Activated naive CD4-positive, alpha-beta T cell treated with anti-CD3 and anti-CD28 coated beads, Interleukin-2, amount 10 ng/mL, durations not matched to agents 7 days and 5 days (primary cell): ENCODE measurements at regions of chr15 and their contacts with region 1.

Region 1: GRCh38 chr15:90598031-90598577 is 68.4 kb downstream of the CRTC3 start:
- DNase-seq: peak; percentile 32
- H3K4me3 Mint-ChIP-seq: peak overlapping the region; percentile 27
- H3K27ac Mint-ChIP-seq: peak overlapping the region; percentile 100
- H3K4me1 Mint-ChIP-seq: peaks cover 80% of the 10 kb centered on the region
- H3K27me3 Mint-ChIP-seq: no peaks in the 10 kb centered on the region

Region 2: GRCh38 chr15:90306560-90306959 is 291.5 kb before region 1 on chr15:
- CTCF ChIA-PET with region 1: no interaction called
- DNase-seq: peak; percentile 50
- H3K4me3 Mint-ChIP-seq: no peak overlapping the region
- H3K27ac Mint-ChIP-seq: peak overlapping the region; percentile 70
- H3K4me1 Mint-ChIP-seq: peaks cover 24% of the 10 kb centered on the region
- H3K27me3 Mint-ChIP-seq: peaks cover 6% of the 10 kb centered on the region

Region 3: DNA sequence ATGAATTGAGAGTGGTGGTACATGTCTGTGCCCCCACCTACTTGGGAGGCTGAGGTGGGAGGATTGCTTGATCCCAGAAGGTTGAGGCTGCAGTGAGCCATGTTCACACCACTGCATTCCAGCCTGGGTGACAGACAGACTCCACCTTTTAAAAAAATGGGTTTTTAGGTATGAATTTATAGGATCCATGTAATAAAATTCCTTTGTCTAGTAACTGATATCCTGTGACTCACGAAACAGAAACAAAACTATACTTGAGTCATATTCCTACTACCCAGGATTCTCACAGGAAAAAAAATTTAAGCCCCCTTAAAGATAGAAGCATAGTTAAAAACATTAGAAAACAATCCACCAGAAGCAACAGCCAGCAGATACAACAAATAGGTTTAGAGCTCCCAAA is 78.4 kb before region 1 on chr15:
- CTCF ChIA-PET with region 1: no interaction called
- DNase-seq: no peak
- H3K4me3 Mint-ChIP-seq: no peak overlapping the region
- H3K27ac Mint-ChIP-seq: no peak overlapping the region
- H3K4me1 Mint-ChIP-seq: peaks cover 9% of the 10 kb centered on the region
- H3K27me3 Mint-ChIP-seq: no peaks in the 10 kb centered on the region

Region 4: DNA sequence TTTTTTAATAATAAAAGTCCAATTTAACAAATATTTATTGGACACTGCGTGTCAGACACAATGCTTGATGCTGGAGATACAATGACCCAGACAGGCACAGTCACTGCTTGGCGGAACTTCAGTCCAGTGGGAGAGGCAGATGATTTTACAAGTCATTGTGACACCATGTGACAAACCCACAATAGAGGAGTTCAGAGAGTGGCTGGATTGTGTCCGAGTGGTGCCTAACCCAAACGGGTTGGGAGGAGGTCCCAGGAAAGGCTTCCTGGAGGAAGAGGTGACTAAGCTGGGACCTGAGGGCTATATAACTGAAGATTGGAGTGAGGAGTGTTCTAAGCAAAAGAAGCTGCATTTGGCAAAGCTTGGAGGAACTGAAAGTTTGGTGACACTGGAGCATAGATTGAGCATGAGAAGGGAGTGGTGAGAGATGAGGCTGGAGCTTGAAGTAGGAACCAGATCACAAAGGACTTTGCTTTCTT is 27.0 kb before region 1 on chr15:
- CTCF ChIA-PET with region 1: interaction called, 12 read pairs
- DNase-seq: no peak
- H3K4me3 Mint-ChIP-seq: peak overlapping the region; percentile 15
- H3K27ac Mint-ChIP-seq: peak overlapping the region; percentile 33
- H3K4me1 Mint-ChIP-seq: peaks cover 91% of the 10 kb centered on the region
- H3K27me3 Mint-ChIP-seq: no peaks in the 10 kb centered on the region